ENCODE measurements at regions of chr6 and their contacts with region 1.

Region 1: GRCh38 chr6:15441215-15441868 is 195.5 kb downstream of the JARID2 start:
- DNase-seq: no peak

Region 2: DNA sequence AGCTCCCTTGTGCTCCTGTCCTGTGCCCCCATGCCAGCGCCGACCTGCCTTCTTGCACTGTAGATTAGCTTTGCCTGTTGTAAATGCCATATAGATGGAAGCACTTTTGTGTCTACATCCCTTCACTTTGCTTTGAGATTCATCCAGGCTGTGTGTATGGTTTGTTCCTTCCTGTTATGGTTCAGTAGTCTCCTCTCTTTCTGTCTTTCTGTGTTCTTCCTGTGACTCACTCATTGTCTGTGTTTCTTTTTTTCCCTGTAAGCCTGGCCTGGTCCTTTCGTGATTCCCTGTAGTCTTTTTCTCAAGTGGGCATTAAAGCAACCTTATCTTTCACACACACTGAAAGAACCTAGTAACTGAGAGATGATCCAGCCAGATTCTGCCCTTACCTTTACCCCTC is 128.8 kb before region 1 on chr6:
- intact Hi-C with region 1: loop called (anchors 10 kb)
- DNase-seq: no peak

Region 3: DNA sequence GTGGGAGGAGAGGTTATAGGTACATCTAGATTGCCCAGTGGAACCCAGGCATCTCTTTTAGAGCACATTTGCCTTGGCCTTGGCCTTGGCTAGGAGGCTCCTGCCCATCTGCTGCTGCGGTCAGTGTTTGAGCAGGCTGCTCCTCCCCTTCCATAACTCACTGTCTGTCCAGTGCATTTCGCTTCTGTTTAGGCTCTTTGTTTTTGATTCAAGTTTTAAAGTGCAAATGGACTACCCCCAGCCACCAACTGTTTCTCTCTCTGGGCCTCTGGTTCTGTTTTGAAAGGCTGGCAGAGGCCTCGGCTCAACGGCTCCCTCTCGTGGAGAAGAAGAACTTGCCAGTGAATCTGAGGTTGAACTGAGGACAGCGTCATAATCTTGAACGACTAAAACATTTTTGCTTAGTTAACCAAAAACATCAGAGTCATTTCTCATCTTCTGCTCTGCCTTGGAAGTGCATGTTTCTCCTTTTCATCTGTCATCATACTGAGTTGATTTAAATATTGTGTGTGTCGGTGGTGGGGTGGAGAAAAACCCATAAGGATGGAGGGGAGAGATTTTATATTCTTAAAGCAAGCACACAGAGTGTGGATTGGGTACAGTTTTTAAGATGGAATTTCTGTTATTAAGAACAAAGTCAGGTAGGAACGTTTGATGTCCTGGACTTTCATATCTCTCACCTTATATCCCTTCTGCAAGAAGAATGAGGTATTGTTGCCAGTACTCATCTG is 50.1 kb after region 1 on chr6:
- intact Hi-C with region 1: loop called (anchors 5 kb)
- DNase-seq: peak; percentile 86

Region 4: GRCh38 chr6:15561447-15562199 is 120.3 kb after region 1 on chr6:
- intact Hi-C with region 1: no loop called
- DNase-seq: no peak